ENCODE measurements at regions of chr3 and their contacts with region 1.

Region 1: DNA sequence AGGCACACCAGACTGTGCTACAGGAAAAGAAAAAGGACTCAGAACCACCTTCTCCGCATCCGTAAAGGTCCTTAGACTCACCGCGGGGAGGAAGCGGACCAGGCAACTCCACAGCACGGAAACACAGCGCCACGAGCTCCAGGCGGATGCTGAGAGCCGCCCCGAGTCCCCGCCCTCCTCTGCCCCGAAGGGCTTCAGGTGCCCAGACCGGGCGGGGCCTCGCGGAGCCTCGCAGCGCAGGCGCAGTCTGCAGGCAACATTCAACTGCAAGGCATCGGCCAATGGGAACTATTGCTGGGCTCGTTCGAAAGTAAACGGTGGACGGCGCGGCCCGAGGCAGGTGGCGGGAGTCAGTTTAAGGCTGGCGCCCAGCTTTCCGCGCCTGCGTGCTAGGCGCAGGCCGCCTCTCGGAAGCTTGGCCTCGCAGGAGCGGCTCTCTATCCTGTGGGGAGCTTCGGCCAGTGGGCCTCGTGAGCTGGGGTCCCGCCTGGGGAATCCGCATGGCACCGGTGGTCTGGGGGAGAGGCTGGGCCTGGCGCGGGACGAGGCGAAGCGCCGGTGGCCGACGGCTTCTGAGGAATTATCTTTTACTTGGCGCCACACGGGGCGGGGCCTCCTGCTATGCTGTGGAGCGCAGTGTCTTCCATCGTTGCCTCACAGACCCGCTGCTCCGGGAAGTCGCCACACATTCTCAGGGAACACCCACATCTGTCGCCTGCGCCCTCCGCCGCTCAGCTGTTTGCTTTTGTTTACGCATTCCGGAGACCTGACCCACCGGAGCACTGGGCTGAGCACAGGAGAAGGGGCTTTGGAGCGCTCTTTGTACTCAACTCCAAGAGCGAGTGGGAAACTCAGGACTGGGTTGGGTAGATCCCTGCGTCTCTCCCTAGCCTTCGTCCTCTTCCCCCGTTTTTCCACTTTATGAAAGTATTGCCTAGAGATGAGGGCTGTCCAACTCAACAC is at the start of gene TRIM59:
- DNase-seq: peak; percentile 96
- ATAC-seq: peak; percentile 90
- H3K4me3 ChIP-seq: peak within 1 kb of the TSS; percentile 89
- H3K27ac ChIP-seq: peak within 1 kb of the TSS; percentile 94
- H3K4me1 ChIP-seq: peaks cover 6% of the 10 kb centered on the region
- H3K27me3 ChIP-seq: no peaks in the 10 kb centered on the region
- CTCF ChIP-seq: 0 out of 6 replicates have a peak, but pooled peaks of 2 of the 3 experiments have one; percentile 5 to 10
- EP300 ChIP-seq: no peak
- POLR2A ChIP-seq: peak; percentile 99
- RAD21 ChIP-seq: no peak
- polyA plus RNA-seq, gene TRIM59: 28.9 to 105 TPM

Region 2: DNA sequence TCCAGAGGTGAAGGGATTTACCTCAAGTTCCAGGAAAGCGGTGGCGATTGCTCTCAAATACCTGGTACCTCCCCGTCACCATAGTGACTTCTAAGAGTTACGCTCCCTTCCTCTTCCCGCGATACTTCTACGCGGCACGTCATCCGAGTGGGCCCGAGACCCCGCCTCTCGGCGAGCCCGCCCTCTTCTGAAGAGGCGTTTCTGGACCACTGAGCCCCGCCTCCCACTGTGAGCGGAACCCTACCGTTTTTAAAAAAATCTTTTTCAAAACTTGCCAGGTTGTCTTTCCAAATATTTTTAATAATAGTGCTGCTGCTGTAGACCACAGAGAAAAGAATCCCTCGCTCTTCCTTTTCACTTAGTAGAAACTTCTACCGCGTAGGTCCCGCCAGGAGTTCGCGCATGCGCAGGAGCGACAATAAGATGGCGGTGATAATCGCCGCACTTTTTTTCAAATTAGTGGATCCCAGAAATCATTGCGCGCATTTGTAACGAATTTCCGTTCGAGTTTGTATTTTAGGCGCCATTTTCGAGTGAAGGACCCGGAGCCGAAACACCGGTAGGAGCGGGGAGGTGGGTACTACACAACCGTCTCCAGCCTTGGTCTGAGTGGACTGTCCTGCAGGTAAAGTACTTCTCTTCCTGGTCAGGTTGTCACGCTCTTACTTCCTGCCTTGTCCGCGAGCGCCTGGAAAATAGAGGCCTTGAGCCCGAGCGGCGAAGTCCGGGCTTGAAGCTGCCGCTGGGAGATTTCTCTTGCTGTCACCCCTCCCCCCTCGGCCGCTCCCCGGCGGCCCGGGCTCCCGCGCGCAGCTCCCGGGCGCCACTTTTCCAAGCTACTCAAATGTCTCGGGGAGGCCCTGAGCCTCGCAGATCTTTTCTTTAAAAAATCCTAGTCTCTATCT is 50.5 kb before region 1 on chr3 and contains the starts of genes IFT80 and SMC4:
- CTCF ChIA-PET with region 1: interaction called, 9 read pairs
- POLR2A ChIA-PET with region 1: interaction called, 34 read pairs
- RAD21 ChIA-PET with region 1: interaction called, 5 read pairs
- SMC1A ChIA-PET with region 1: interaction called, 19 read pairs
- in situ Hi-C with region 1: no loop called
- intact Hi-C with region 1: loop called (anchors 1 kb)
- DNase-seq: peak; percentile 84
- ATAC-seq: peak; percentile 87
- H3K4me3 ChIP-seq: peak within 1 kb of the TSS; percentile 99
- H3K27ac ChIP-seq: peak within 1 kb of the TSS; percentile 90
- H3K4me1 ChIP-seq: no peaks in the 10 kb centered on the region
- H3K27me3 ChIP-seq: no peaks in the 10 kb centered on the region
- CTCF ChIP-seq: no peak
- EP300 ChIP-seq: no peak
- POLR2A ChIP-seq: peak; percentile 79
- RAD21 ChIP-seq: no peak
- polyA plus RNA-seq, gene IFT80: 6.5 to 6.7 TPM
- polyA plus RNA-seq, gene SMC4: 75.6 to 127 TPM

Region 3: DNA sequence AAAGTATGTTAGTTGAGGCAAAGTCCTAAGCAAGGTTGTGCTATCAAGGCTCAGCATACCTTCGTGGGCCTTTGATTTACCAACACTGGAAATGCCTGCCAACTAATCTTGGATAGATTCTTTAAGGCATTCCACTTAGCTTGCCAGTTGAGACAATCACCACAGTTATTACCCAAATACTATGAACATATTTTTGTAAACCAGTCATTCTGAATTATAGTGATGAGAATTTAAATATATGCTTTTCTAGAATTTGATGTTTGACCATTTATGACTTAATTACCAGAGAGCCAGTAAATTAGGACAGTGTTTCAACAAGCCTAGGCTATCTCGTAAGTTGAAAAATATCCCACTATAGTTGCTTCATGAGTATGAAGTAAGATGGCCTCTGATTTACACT is 15.8 kb before region 1 on chr3:
- CTCF ChIA-PET with region 1: interaction called, 8 read pairs
- POLR2A ChIA-PET with region 1: interaction called, 6 read pairs
- RAD21 ChIA-PET with region 1: interaction called, 22 read pairs
- SMC1A ChIA-PET with region 1: interaction called, 27 read pairs
- in situ Hi-C with region 1: no loop called
- intact Hi-C with region 1: no loop called
- DNase-seq: no peak
- ATAC-seq: no peak
- H3K4me3 ChIP-seq: no peak overlapping the region
- H3K27ac ChIP-seq: no peak overlapping the region
- H3K4me1 ChIP-seq: no peaks in the 10 kb centered on the region
- H3K27me3 ChIP-seq: no peaks in the 10 kb centered on the region
- CTCF ChIP-seq: no peak
- EP300 ChIP-seq: no peak
- POLR2A ChIP-seq: no peak
- RAD21 ChIP-seq: no peak

Region 4: DNA sequence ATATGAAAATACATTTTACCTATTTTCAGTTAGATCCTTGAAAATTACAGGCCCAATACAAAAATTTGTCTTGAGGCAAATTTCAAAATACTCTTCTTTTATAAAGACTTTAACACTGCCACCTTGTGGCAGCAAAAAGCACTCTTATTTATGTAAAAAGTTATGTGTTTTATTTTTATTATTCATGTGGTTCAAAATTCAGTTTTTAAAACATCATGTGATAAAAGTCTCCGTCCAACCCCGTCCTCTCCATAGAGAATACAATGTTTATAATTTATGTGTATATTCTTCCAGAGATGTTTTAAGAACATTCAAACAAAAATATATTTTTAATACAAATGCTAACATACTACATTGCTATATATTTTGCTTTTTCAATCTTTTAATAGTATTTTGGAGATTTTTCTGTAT is 36.5 kb after region 1 on chr3:
- CTCF ChIA-PET with region 1: interaction called, 4 read pairs
- POLR2A ChIA-PET with region 1: no interaction called
- RAD21 ChIA-PET with region 1: interaction called, 5 read pairs
- SMC1A ChIA-PET with region 1: interaction called, 6 read pairs
- in situ Hi-C with region 1: no loop called
- intact Hi-C with region 1: loop called (anchors 2 kb)
- DNase-seq: no peak
- ATAC-seq: peak; percentile 44
- H3K4me3 ChIP-seq: no peak overlapping the region
- H3K27ac ChIP-seq: no peak overlapping the region
- H3K4me1 ChIP-seq: peaks cover 3% of the 10 kb centered on the region; the same call in 1 of the 2 replicates
- H3K27me3 ChIP-seq: no peaks in the 10 kb centered on the region
- CTCF ChIP-seq: peak; percentile 30 to 58 (median 49); a peak in 5 of 6 replicates
- EP300 ChIP-seq: no peak
- POLR2A ChIP-seq: no peak
- RAD21 ChIP-seq: peak; percentile 33; the same call in 1 of the 2 replicates

Region 5: DNA sequence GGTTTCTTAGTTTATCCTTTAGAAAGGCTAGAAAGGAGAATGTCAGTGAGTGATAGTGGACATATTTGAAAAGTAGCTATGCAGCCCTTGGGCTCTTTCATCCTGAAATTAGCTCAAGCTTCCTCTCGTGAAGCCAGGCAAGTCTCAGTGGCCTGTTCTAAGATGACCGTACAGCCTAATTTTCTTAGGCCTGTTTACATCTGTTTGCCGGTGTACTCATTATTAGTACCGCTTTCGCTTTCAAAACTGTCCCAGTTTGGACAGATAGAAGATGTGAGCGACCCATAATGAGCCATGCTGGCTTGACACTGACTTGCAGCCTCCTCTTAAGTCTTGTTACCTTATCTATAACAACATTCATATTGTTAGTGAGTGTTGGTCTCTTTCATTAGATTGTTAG is 221.3 kb after region 1 on chr3:
- CTCF ChIA-PET with region 1: no interaction called
- POLR2A ChIA-PET with region 1: no interaction called
- RAD21 ChIA-PET with region 1: no interaction called
- SMC1A ChIA-PET with region 1: no interaction called
- in situ Hi-C with region 1: no loop called
- intact Hi-C with region 1: loop called (anchors 5 kb)
- DNase-seq: peak; percentile 59
- ATAC-seq: peak; percentile 96
- H3K4me3 ChIP-seq: no peak overlapping the region
- H3K27ac ChIP-seq: peak overlapping the region; percentile 66
- H3K4me1 ChIP-seq: peaks cover 4% of the 10 kb centered on the region
- H3K27me3 ChIP-seq: no peaks in the 10 kb centered on the region
- CTCF ChIP-seq: peak in 2 of 3 experiments; percentile 12 to 19; a peak in 2 of 6 replicates
- EP300 ChIP-seq: no peak
- POLR2A ChIP-seq: no peak
- RAD21 ChIP-seq: no peak